ENCODE measurements at regions of chr6 and their contacts with region 1.

Region 1: DNA sequence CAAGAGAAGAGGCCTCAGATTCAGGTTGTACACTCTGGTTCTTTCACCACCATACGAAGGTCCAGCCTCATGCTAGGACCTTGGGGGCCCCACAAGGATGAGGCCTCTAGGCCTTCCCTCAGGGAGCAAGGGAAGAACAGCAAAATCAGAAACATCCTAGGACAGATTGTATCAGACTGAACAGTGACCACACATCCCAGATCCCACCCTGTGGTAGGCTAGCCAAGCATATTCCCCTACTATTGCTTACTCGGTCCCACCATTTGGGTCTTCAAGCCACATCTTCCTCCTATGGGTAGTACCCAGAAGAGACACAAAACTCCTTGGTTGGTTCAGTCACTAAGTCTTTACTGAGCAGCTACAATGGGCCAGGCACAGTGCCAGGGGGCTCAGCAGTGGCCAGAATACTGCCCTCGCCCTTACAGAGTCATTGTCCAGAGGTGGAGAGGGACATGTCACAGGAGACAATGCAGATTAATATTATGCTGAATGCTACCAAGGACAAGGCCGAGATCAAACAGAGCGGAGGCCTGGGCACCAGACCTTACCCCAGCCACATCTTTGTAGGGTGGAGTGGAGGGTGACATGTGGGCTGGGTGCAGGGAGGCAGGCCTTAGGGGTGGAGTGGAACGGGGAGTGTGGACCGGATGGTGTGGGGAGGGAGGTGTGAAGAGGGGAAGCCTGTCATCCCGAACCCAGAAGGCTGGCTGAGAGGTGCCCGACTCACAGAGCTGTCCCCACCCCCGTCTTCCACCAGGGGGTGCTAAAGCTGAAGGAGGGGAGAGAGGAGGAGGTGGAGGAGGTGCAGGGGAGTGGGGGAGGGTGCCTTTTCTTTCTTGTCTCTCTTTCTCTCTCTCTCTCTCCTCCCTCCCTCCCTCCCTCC is 6.8 kb upstream of the MAPK13 start:
- DNase-seq: peak; percentile 88 to 92
- ATAC-seq: peak; percentile 87
- H3K4me3 ChIP-seq: no peak overlapping the region
- H3K27ac ChIP-seq: no peak overlapping the region
- H3K4me1 ChIP-seq: no peaks in the 10 kb centered on the region
- H3K27me3 ChIP-seq: no peaks in the 10 kb centered on the region

Region 2: DNA sequence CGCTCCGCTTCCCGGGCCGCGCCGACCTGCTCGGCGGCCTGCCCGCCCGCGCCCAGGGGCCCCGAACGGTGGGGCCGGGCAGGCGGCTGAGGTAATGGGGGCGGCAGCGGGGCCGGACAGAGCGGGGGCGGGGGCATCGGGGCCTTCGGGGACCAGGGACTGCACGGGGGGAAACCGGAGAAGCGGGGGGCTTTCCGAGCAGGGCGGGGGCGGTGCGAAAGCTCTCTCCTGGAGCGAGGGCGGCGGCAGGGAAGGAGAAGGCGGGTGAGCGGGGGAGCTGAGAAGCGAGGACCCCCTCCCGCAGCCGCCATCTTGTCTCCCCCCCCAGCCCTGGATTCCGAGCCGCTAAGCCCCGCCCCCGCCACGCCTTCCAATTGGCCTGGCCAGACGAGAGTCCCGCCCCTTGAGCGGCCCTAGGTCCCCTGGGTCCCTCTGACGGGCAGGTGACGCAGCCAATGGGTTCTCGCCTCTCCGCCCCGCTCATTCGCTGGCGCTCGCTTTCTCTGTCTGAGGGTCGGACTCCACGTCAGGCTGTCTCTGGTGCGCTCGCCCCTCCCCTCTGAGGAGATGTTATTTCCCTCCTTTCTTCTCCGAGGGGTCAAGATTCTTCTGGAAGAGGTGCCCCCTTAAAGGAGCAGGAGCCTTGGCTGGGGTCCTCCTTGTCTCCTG is 73.5 kb after region 1 on chr6:
- intact Hi-C with region 1: loop called (anchors 2 to 10 kb)
- DNase-seq: peak; percentile 99 to 100
- ATAC-seq: peak; percentile 99
- H3K4me3 ChIP-seq: peak overlapping the region; percentile 72 to 96
- H3K27ac ChIP-seq: peak overlapping the region; percentile 49 to 92
- H3K4me1 ChIP-seq: no peaks in the 10 kb centered on the region
- H3K27me3 ChIP-seq: no peaks in the 10 kb centered on the region

Region 3: GRCh38 chr6:36368921-36369865 is 245.7 kb after region 1 on chr6:
- intact Hi-C with region 1: loop called (anchors 5 kb)
- DNase-seq: peak in 1 of 2 donors; percentile 31
- ATAC-seq: no peak
- H3K4me3 ChIP-seq: no peak overlapping the region
- H3K27ac ChIP-seq: no peak overlapping the region
- H3K4me1 ChIP-seq: no peaks in the 10 kb centered on the region
- H3K27me3 ChIP-seq: no peaks in the 10 kb centered on the region

Region 4: GRCh38 chr6:36839749-36840431 is 716.4 kb after region 1 on chr6:
- intact Hi-C with region 1: no loop called
- DNase-seq: peak; percentile 62 to 87
- ATAC-seq: peak; percentile 72
- H3K4me3 ChIP-seq: peak overlapping the region; percentile 23 to 24
- H3K27ac ChIP-seq: no peak overlapping the region
- H3K4me1 ChIP-seq: no peaks in the 10 kb centered on the region
- H3K27me3 ChIP-seq: no peaks in the 10 kb centered on the region

Measured in aorta (tissue), 5 donors.